ENCODE measurements at regions of chr6 and their contacts with region 1.

Region 1: DNA sequence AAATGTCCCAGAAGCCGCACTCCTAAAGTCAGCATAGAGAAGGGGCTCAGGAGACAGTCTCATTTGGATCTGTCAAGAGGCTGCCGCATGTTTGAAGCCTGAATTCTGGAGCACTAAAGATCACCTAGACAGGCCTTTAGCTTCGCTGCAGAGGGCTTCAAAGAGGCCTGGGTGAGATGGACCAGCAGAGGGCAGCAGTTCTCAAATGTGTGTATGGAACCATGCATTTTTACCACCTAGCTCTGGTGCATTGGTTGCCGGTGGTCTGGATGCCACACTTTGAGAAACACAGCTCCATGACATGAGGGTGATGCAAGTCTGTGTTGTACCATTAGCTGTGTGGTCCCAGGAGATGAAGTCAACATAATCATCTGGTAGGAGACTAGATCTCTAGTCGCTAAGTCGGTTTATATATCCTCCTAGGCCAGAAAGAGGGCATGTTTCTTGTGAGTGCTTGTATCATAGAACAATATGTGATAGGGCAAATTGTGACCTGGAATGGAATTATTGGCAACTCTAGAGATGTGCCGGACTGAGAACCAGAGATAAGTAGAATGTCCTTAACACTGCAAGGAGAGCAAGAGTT is 64.8 kb downstream of the KIAA0319 start:
- DNase-seq: peak; percentile 80
- ATAC-seq: peak; percentile 68 to 74

Region 2: GRCh38 chr6:24428628-24429027 is 152.5 kb before region 1 on chr6:
- intact Hi-C with region 1: no loop called
- DNase-seq: no peak
- ATAC-seq: no peak

Region 3: DNA sequence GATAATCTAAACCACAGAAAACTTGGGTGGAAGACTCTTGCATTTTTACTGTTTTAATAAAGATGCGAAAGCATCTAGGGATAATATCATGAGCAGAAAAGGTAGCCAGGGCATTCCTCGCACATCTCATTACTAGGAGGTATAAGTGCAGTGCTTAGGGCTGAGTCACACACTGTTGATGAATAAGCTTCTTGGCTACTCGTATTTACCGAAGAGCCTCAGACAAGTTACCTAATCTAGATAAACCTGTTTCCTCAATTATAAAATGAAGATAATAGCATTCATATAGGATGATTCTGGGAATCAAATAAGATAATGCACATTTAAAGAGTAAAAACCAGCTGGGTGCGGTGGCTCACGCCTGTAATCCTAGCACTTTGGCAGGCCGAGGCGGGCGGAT is 65.6 kb after region 1 on chr6:
- intact Hi-C with region 1: no loop called
- DNase-seq: no peak
- ATAC-seq: peak in 1 of 2 donors; percentile 51

Region 4: DNA sequence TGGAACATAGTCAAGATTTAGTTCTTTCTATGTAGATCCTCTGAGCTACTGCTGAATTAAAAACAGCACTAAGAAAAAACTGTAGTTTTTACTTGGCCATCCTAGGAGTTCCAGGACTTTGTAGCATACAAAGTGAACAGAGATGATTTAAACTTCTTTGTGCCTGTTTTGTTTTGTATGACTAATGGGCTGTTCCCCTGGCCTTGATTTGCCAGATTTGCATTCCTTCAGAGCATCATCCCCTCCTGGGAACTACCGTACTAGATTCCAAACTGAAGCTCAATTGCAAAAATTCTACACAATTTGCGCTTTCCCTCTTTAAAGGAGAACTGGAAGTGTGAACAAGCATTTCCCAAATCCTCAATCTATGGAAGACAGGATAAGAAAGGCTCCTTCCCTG is 108.8 kb after region 1 on chr6:
- intact Hi-C with region 1: loop called (anchors 2 to 5 kb)
- DNase-seq: no peak
- ATAC-seq: peak in 1 of 2 donors; percentile 29

Region 5: DNA sequence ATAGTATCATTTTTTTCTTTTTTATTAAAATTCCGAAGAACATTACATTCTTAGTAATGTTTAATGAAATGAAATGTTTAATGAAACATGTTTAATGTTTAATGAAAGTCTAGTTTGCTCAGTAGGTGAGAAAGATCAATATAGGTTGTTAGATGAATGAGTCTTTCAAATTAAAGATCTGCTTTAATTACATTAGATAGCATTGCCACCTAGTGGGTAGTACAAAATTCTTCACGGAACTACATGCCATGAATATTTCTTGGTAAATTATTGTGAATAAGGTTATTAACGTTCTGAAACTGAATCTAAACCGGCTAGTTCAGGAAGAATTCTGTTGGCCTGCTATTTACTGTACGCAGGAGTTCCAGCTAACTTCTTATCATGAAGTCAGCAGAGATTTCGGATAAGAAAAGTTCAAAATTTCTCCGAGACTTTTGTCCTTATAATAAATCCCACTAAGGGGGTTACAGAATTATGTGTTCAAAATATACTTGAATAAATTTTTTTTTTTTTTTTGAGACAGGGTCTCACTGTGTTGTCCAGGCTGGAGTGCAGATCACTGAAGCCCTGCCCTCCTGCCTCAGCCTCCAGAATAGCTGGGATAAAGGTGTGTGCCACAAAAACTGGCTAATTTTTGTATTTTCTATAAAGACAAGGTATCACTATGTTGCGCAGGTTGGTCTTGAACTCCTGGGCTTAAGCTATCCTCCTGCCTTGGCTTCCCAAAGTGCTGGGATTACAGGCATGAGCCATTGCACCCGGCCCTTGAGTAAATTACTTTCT is 185.7 kb after region 1 on chr6:
- intact Hi-C with region 1: loop called (anchors 5 to 10 kb)
- DNase-seq: no peak
- ATAC-seq: peak; percentile 41 to 51

Region 6: DNA sequence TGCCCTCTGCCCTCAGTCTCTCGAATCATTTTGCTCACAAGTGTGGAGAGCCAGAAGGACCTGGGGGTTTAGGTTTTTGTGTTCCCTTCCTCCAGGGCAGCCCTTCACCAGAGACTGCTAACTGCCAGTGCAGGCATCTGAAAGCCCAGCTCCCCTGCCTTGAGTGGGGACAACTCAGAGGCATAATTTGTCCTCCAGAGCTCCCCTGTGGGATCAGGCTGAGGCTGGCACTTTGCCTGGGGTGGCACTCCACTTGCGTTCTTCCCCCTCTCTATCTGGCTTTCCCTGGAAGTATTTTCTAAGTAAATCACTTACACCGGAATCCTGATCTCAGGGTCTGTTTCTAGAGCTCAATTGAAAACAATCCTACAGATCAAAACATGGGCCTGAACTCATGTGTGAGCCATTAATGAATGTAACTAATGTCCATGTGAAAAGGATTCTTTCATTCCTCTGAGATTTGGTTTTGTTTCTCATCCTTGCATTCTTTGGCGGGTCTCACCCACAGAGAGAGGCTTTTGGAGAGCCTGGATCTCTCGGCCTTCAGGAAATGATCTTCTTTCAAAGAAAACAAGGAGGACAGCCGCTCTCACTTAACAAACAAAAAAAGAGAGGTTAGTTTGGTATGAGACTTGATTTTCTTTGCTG is 480.2 kb after region 1 on chr6:
- intact Hi-C with region 1: loop called in 1 of 2 experiments (anchors 10 kb)
- DNase-seq: no peak
- ATAC-seq: no peak

Measured in left cardiac atrium (tissue), 4 donors.